Ascending aorta (tissue), 2 donors: ENCODE measurements at regions of chr7 and their contacts with region 1.

Region 1: DNA sequence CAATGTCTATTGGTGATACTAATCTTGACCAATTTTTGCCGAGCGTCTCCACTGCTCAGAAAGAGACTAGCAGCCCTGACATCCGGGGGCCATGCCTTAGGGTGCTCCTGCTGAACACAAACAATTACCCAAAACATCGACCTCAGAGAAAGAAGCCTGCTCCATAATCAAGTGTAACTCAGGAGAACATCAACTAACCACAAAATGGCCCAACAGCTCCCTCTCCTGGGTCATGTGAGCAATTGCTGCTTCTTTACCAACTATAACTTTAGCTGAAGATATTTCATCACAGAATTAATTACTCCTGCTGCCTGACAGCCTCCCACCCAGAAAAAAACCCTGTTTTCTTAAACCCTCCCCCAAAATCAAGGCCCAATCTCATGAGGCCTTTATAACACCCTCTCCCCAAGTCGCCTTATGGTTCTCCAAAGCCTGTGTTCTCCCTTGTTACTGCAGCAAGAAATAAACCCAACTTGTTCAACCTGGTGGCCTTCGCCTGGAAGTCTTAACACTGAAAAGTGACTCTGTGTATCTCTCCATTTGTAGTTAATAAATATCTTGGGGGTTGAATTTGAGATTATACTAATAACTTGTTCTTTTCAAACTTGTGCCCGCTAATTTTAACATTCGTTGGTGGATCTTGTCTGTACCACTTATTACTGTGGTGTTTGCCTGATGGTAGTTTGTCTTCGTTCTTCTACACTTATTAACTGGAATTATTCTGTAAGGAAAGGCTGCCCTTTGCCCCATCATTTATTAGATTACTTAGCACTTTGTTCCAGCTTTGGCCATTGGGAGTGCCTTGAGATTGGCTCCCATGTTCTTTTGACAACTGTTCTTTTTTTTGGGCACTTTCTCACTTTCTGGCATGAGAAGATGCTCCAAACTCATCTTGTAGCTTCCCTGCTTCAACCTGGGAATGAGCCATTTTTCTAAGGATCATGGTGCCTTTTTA is 21.2 kb upstream of the RAMP3 start:
- DNase-seq: no peak
- H3K4me3 ChIP-seq: no peak overlapping the region
- H3K27ac ChIP-seq: no peak overlapping the region
- H3K4me1 ChIP-seq: no peaks in the 10 kb centered on the region
- H3K27me3 ChIP-seq: no peaks in the 10 kb centered on the region
- CTCF ChIP-seq: peak; percentile 68 to 89 (median 72)

Region 2: GRCh38 chr7:44858161-44858560 is 278.2 kb before region 1 on chr7:
- intact Hi-C with region 1: loop called (anchors 2 kb)
- DNase-seq: no peak
- H3K4me3 ChIP-seq: no peak overlapping the region
- H3K27ac ChIP-seq: no peak overlapping the region
- H3K4me1 ChIP-seq: peaks cover 0 to 2% of the 10 kb centered on the region in 2 donors
- H3K27me3 ChIP-seq: no peaks in the 10 kb centered on the region
- CTCF ChIP-seq: no peak

Region 3: GRCh38 chr7:44973610-44974401 is 162.6 kb before region 1 on chr7:
- intact Hi-C with region 1: loop called (anchors 5 kb)
- DNase-seq: no peak
- H3K4me3 ChIP-seq: no peak overlapping the region
- H3K27ac ChIP-seq: no peak overlapping the region
- H3K4me1 ChIP-seq: no peaks in the 10 kb centered on the region
- H3K27me3 ChIP-seq: no peaks in the 10 kb centered on the region
- CTCF ChIP-seq: peak; percentile 29 to 41 (median 31)

Region 4: GRCh38 chr7:45146531-45147379 is 10.4 kb after region 1 on chr7:
- intact Hi-C with region 1: no loop called
- DNase-seq: no peak
- H3K4me3 ChIP-seq: no peak overlapping the region
- H3K27ac ChIP-seq: no peak overlapping the region
- H3K4me1 ChIP-seq: no peaks in the 10 kb centered on the region
- H3K27me3 ChIP-seq: no peaks in the 10 kb centered on the region
- CTCF ChIP-seq: no peak